Astrocyte of the cerebellum (primary cell): ENCODE measurements at regions of chr3 and their contacts with region 1.

Region 1: DNA sequence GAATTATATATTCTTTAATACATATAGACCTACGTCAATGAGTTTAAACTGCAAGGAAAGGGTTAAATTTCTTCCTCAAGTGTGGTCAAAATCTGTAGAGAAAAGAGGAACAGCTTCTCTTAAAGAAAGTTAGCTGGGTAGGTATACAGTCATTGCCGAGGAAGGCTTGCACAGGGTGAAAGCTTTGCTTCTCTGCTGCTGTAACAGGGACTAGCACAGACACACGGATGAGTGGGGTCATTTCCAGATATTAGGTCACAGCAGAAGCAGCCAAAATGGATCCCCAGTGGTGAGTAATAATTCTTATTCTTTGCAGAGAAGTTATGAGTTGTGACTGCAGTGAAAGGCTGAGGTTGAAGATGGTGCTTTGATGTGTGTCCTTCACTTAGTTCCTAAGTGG is at the start of gene CD86:
- DNase-seq: no peak
- H3K4me3 ChIP-seq: no peak within 1 kb of the TSS
- CTCF ChIP-seq: no peak

Region 2: DNA sequence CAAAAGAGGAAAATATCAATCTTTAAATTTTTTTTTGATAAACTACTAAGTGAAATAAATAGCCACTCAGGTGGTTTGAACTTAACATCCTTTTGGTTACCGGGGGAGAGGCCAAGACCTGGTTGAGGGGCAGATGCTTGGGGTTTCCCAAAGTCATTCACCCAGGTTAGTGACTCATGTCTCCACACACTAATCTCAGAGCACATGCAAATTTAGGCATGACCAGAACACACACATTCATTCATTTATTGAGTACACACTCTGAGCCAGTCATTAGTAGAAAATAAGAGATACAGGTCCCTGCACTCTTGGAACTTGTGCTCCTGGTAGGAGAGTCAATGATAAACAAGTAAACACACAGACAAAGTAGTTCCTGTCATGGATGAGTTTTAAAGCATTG is 40.5 kb before region 1 on chr3:
- in situ Hi-C with region 1: loop called (anchors 5 kb)
- DNase-seq: no peak
- H3K4me3 ChIP-seq: no peak overlapping the region
- CTCF ChIP-seq: no peak